ENCODE measurements at regions of chr10 and their contacts with region 1.

Region 1: GRCh38 chr10:14822879-14823755 is 14.7 kb downstream of the CDNF start:
- DNase-seq: no peak

Region 2: GRCh38 chr10:14499601-14499904 is 323.6 kb before region 1 on chr10:
- intact Hi-C with region 1: loop called (anchors 5 kb)
- DNase-seq: no peak

Region 3: DNA sequence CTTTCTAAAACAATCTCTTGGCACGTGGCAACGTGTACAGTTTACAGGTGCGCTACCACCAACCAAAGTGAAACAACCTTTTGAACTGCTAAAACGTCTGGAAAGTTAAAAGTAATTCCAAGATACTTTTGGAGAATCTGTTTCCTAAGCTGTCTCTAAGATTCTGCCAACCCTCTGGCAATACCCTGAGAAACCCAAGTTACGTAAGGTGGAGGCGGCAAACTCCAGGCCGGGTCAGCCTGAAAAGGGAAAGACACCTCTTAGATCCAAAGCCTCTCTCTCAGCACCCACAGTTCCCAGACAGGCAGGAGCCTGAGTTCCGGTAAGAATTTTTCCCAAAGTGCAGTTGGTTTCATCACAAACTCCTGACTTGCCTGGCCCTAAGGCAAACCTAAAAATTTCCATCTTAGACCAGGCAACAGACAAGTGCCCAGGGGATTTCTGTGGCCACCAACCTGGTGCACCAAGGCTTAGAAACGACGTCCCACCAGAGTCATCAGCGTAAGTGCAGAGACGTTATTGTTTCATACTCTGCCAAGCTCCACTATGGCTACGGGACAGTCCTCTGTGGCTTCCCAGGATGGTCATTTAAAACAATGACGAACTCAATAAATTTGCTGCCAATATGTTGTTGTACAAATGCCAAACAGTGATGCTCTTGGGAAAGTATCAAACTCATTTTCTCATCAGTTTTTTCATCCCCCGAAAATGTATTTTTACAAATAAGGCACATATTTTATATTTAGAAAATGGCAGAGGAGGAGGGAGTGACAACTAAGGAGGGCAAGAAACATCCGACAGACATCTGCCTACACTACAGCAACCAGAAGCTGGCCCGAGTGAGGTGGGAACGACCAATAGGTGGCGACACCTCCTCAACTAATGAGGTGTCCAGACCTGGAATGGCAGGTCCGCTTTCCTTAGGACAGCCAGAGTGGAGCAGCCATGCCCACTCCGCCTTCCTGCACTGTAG is 286.6 kb before region 1 on chr10:
- intact Hi-C with region 1: loop called (anchors 5 kb)
- DNase-seq: peak; percentile 86

Region 4: GRCh38 chr10:14772399-14772798 is 50.7 kb before region 1 on chr10:
- intact Hi-C with region 1: no loop called
- DNase-seq: no peak

Region 5: DNA sequence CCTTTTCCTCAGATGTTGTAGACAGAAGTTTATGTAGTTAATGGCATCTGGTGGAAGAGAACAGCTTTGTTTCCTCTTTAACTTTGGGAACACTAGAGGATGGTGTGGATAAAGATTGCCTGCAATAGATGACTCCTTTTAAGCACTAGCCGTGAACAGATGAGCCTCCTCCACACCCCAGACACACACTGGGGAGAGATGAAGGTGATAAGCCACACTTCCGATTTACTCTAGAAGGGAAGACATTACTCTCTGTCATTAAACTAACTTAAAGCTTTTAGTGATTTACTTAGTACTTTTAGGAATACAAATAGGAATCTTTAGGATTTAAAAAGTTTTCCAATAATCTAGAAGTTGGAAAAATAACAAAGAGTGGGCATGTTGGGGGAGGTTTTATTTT is 21.8 kb after region 1 on chr10:
- intact Hi-C with region 1: no loop called
- DNase-seq: no peak